Breast epithelium (tissue), 4 donors: ENCODE measurements at regions of chr6 and their contacts with region 1.

Region 1: DNA sequence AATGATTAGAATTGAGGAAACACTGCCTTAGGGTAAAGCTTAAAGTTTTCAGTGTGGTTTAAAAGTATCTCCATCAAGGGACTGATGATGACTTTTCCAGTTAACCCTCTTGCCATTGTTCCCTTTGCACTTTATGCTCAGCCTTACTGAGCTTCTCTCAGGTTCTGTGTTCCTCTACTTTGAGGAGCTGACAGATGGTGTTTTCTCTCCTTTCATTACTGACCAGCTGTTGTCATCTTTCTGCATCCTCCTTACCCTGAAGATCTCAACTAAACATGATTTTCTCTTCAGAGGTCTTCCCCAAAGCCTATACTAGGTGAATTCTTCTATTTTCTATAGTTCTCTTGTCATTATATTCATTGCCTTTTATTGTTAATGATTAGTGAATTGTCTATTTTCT is 475.6 kb upstream of the SYNCRIP start:
- DNase-seq: no peak
- H3K4me3 ChIP-seq: no peak overlapping the region
- H3K27ac ChIP-seq: no peak overlapping the region
- H3K4me1 ChIP-seq: no peaks in the 10 kb centered on the region
- H3K27me3 ChIP-seq: no peaks in the 10 kb centered on the region
- CTCF ChIP-seq: no peak
- POLR2A ChIP-seq: no peak

Region 2: DNA sequence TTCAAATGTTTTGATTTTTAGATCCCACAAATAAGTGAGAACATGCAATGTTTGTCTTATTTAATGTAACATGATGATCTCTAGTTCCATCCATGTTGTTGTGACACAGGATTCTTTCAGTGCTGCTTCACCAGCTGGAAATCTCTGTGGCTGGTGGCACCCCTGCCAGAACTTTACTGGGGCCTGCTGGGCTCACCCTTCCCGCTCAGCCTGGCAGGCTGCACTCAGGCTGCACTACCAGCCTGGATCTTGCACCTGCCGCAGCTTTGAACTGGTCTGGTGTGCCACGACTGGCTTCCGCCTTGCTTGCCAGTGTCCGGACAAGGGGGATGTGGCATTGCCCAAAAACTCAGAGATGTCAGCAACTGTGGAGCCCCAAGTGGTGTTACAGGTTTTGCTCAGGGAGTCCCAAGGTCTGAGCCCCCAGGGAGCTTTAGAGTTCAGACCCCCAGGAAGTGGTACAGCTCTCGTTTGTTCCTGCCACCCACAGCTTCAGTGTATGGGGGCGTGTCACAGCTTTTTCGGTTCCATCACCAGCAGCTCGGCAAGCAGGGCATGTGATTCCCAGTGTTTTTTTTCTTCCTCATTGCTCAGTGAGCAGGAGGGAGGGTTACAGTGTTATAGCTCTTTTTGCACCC is 403.3 kb before region 1 on chr6:
- intact Hi-C with region 1: no loop called
- DNase-seq: no peak
- H3K4me3 ChIP-seq: no peak overlapping the region
- H3K27ac ChIP-seq: no peak overlapping the region
- H3K4me1 ChIP-seq: no peaks in the 10 kb centered on the region
- H3K27me3 ChIP-seq: no peaks in the 10 kb centered on the region
- CTCF ChIP-seq: no peak
- POLR2A ChIP-seq: no peak

Region 3: GRCh38 chr6:86128130-86128814 is 10.0 kb after region 1 on chr6:
- intact Hi-C with region 1: loop called (anchors 1 kb)
- DNase-seq: no peak
- H3K4me3 ChIP-seq: no peak overlapping the region
- H3K27ac ChIP-seq: no peak overlapping the region
- H3K4me1 ChIP-seq: no peaks in the 10 kb centered on the region
- H3K27me3 ChIP-seq: no peaks in the 10 kb centered on the region
- CTCF ChIP-seq: no peak
- POLR2A ChIP-seq: no peak

Region 4: DNA sequence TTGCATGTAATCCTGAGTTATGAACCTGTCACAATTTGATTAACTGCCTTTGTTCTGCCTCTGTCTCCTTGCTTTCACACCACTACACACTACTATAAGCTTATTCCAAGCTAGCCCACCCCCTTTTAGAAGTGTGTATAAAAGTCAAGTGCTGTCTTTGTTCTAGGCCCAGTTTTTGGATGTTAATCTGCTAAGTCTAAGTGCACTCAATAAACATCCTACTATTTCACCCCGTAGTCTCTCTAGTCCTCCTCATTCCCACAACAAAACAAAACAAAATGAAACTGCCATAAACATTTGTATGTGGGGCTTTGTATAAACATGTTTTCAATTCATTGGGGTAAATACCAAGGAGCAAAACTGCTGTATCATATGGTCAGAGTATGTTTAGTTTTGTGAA is 1913.3 kb after region 1 on chr6:
- intact Hi-C with region 1: no loop called
- DNase-seq: no peak
- H3K4me3 ChIP-seq: no peak overlapping the region
- H3K27ac ChIP-seq: no peak overlapping the region
- H3K4me1 ChIP-seq: no peaks in the 10 kb centered on the region
- H3K27me3 ChIP-seq: no peaks in the 10 kb centered on the region
- CTCF ChIP-seq: no peak
- POLR2A ChIP-seq: no peak